A549 (cell line): ENCODE measurements at regions of chr3 and their contacts with region 1.

Region 1: GRCh38 chr3:4978204-4978965 is 852 bp upstream of the BHLHE40 start:
- DNase-seq: peak; percentile 94 to 98
- ATAC-seq: peak; percentile 65 to 77
- H3K4me3 ChIP-seq: peak overlapping the region; percentile 88
- H3K27ac ChIP-seq: peak overlapping the region; percentile 96 to 98
- H3K4me1 ChIP-seq: peaks cover 18% of the 10 kb centered on the region
- CTCF ChIP-seq: no peak
- EP300 ChIP-seq: no peak; a peak in 1 of 5 replicates
- POLR2A ChIP-seq: peak; percentile 6; the same call in 1 of the 2 replicates
- RAD21 ChIP-seq: peak in 1 of 2 experiments; percentile 19; a peak in 2 of 5 replicates

Region 2: GRCh38 chr3:4245671-4246070 is 732.7 kb before region 1 on chr3:
- CTCF ChIA-PET with region 1: no interaction called
- POLR2A ChIA-PET with region 1: no interaction called
- DNase-seq: peak in 1 of 2 experiments; percentile 4
- ATAC-seq: no peak; a peak in 1 of 6 replicates
- H3K4me3 ChIP-seq: no peak overlapping the region
- H3K27ac ChIP-seq: no peak overlapping the region
- H3K4me1 ChIP-seq: no peaks in the 10 kb centered on the region
- CTCF ChIP-seq: no peak
- EP300 ChIP-seq: no peak
- POLR2A ChIP-seq: no peak
- RAD21 ChIP-seq: no peak

Region 3: GRCh38 chr3:4736284-4736861 is 242.0 kb before region 1 on chr3:
- CTCF ChIA-PET with region 1: interaction called, 12 read pairs
- POLR2A ChIA-PET with region 1: interaction called, 8 read pairs
- DNase-seq: no peak
- ATAC-seq: no peak
- H3K4me3 ChIP-seq: no peak overlapping the region
- H3K27ac ChIP-seq: no peak overlapping the region
- H3K4me1 ChIP-seq: peaks cover 32% of the 10 kb centered on the region
- CTCF ChIP-seq: no peak
- EP300 ChIP-seq: no peak
- POLR2A ChIP-seq: no peak
- RAD21 ChIP-seq: no peak

Region 4: DNA sequence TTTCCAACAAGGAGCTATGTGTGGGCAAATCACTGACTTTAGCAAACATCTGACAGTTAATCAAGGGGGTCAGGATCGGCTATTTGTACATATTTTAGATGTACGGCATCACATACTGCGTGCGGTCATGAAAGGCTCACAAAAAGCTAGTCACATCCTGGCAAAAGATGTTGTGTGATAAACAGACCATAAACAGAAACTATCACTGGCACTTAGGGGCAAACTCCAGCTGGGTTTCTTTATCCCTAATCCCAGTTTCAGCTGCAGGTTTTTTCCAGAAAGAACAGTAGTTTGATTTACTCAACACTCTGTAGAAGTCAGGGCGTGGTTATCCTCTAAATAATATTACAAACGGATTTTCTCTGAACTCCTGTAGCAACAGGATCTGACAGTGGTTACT is 111.5 kb before region 1 on chr3:
- CTCF ChIA-PET with region 1: interaction called, 16 read pairs
- POLR2A ChIA-PET with region 1: interaction called, 3 read pairs
- DNase-seq: peak in 1 of 2 experiments; percentile 63
- ATAC-seq: no peak
- H3K4me3 ChIP-seq: peak overlapping the region; percentile 46; the same call in 2 of the 3 replicates
- H3K27ac ChIP-seq: peak overlapping the region; percentile 77 to 92
- H3K4me1 ChIP-seq: peaks cover 21% of the 10 kb centered on the region
- CTCF ChIP-seq: no peak
- EP300 ChIP-seq: no peak
- POLR2A ChIP-seq: no peak
- RAD21 ChIP-seq: no peak

Region 5: DNA sequence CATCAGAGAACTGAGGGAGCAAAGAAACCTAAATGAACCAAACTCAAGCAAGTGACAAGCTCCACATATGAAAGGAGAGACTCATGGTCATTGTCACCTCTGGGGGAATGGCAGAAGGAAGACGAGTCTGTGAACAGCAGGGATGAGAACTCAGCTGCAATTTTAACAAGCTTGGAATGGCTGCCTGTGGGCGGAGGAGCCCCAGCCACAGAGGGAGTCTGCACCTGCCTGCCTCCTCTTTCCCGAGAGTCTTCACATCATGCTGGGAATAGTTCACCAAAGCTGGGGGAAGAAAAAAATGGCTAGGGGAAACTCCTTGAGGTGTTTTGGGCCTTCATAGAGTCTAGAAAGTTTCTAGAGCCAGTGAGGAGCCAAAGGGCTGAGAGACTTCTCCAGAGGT is 20.4 kb before region 1 on chr3:
- CTCF ChIA-PET with region 1: interaction called, 12 read pairs
- POLR2A ChIA-PET with region 1: no interaction called
- DNase-seq: no peak
- ATAC-seq: no peak
- H3K4me3 ChIP-seq: no peak overlapping the region
- H3K27ac ChIP-seq: no peak overlapping the region
- H3K4me1 ChIP-seq: no peaks in the 10 kb centered on the region
- CTCF ChIP-seq: no peak
- EP300 ChIP-seq: no peak
- POLR2A ChIP-seq: no peak
- RAD21 ChIP-seq: no peak

Region 6: DNA sequence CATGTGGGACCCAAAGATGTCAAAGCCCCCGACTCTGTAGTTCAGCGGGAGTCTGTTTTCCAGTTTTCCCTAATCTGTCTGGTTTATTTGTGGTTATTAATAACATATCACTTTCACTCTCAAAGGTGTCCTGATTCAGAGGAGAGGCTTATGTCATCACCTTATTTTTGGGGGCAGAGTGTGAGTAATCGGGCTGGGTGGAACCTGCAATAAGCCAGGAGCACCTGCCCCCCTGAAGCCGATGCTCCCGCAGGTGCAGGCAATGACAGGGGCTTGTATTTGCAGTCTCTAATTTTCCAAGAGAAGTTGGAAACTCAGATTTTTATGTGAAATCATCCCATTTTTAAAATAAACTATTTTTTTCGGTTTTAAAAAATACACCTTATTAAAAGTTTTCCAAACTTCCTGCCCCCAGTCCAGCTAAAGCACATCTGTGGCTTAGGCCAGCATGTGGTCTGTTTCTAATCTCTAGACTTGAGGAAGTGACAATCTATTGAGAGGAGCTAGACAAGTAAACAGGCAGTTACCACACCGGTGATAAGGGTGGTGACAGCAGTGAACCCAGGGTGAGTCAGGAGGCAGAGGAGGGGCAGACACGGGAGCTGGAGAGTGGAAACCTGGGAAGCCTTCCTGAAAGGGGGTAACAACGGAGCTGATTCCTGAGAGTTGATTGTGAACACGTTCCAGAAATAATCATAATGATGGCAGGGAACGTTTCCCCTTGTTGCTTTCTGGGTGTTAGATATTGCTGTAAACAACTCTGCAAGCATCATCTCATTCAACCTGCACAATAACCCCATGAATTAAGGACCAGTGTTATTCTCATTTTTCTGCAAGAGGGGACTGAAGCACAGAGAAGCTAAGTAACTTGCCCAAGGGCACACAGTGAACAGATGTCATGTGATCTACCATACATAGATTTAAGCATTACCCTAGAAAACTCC is 38.1 kb after region 1 on chr3:
- CTCF ChIA-PET with region 1: interaction called, 445 read pairs
- POLR2A ChIA-PET with region 1: interaction called, 367 read pairs
- DNase-seq: peak; percentile 90 to 95
- ATAC-seq: peak; percentile 74 to 81
- H3K4me3 ChIP-seq: no peak overlapping the region
- H3K27ac ChIP-seq: peak overlapping the region; percentile 94 to 98
- H3K4me1 ChIP-seq: peaks cover 98% of the 10 kb centered on the region
- CTCF ChIP-seq: no peak
- EP300 ChIP-seq: peak; percentile 83 to 85; a peak in 4 of 5 replicates
- POLR2A ChIP-seq: no peak
- RAD21 ChIP-seq: peak in 1 of 2 experiments; percentile 17; a peak in 1 of 5 replicates

Region 7: DNA sequence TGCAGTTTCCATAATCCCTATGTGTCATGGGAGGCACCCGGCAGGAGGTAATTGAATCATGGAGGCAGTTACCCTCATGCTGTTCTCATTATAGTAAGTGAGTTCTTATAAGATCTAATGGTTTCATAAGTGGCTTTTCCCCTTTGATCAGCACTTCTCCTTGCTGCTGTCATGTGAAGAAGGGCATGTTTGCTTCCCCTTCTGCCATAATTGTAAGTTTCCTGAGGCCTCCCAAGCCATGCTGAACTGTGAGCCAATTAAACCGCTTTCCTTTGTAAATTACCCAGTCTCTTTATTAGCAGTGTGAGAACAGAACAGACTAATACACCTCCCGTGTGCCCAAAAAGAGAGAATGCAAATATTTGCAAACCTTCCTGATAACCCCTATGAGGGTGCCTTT is 69.4 kb after region 1 on chr3:
- CTCF ChIA-PET with region 1: interaction called, 92 read pairs
- POLR2A ChIA-PET with region 1: interaction called, 12 read pairs
- DNase-seq: no peak
- ATAC-seq: no peak
- H3K4me3 ChIP-seq: no peak overlapping the region
- H3K27ac ChIP-seq: no peak overlapping the region
- H3K4me1 ChIP-seq: no peaks in the 10 kb centered on the region
- CTCF ChIP-seq: no peak
- EP300 ChIP-seq: no peak
- POLR2A ChIP-seq: no peak
- RAD21 ChIP-seq: no peak